Ovary (tissue), 10 donors: ENCODE measurements at regions of chrX and their contacts with region 1.

Region 1: GRCh38 chrX:53211391-53211978 is 13.5 kb downstream of the KDM5C start:
- DNase-seq: no peak
- H3K4me3 ChIP-seq: no peak overlapping the region
- H3K27ac ChIP-seq: no peak overlapping the region
- H3K4me1 ChIP-seq: no peaks in the 10 kb centered on the region
- H3K27me3 ChIP-seq: no peaks in the 10 kb centered on the region
- CTCF ChIP-seq: no peak
- EP300 ChIP-seq: no peak
- POLR2A ChIP-seq: no peak

Region 2: DNA sequence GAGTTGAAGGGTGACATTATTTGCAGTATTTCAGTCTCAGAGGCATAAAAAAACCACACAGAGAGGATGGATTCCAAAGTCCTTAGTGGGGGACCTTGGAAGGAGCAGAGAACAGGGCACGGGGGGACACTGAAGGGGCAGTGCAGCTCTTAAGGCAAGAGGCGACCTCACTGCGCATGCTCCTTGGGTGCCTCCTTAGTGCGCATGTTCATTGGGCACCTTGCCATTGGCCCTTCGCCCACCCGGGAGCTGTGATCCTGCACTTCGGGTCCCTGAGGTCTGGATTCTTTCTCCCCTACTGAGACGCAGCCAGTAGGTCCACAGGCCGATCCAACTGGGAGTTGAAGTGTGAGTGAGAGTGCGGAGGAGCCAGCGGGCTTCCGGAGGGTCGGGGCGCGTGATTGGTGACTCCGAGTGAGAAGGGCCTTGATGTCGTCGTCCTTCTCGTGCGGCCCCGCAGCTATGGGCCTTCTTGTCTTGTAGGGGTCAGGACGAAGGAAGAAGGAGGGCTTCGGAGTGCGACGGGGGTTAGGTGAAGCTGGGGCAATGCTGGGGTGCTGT is 400.3 kb before region 1 on chrX and contains the start of gene XAGE5:
- intact Hi-C with region 1: no loop called
- DNase-seq: no peak
- H3K4me3 ChIP-seq: no peak within 1 kb of the TSS
- H3K27ac ChIP-seq: no peak within 1 kb of the TSS
- H3K4me1 ChIP-seq: no peaks in the 10 kb centered on the region
- H3K27me3 ChIP-seq: no peaks in the 10 kb centered on the region
- CTCF ChIP-seq: no peak
- EP300 ChIP-seq: no peak
- POLR2A ChIP-seq: no peak
- total RNA-seq, gene XAGE5: not detected

Region 3: DNA sequence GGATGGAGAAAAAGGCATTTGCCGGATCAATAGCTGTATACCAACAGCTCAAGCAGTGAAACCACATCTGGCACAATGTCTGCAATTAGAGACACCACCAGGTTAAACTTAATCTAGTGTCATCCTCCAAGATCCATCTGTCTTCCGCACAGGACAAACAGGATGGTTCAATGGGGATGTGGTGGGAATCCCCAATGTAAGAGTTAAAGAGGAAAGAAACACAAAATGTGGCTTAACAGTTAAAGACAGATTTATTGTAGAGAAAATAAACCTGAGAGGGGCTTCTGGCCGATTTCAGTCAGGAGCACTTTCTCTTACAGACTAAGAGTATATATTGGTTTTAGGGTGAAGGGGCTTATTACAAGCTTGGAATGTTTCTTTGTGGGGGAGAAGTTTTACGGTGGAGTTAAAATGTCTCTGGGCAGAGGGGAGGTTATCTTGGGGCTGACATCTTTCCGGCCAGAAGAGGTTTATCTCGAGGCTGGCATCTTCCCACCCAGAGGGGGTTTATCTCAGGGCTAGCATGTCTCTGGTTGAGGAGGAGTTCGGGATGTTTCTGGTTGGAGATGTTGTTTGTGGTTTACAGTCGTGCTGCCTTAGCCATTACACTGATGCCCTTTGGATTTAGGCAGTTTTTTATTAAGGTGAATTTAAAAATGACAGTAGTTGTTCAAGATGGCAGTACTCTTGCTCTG is 55.8 kb before region 1 on chrX:
- intact Hi-C with region 1: loop called in 1 of 4 experiments (anchors 10 kb)
- DNase-seq: no peak
- H3K4me3 ChIP-seq: no peak overlapping the region
- H3K27ac ChIP-seq: no peak overlapping the region
- H3K4me1 ChIP-seq: no peaks in the 10 kb centered on the region
- H3K27me3 ChIP-seq: no peaks in the 10 kb centered on the region
- CTCF ChIP-seq: no peak
- EP300 ChIP-seq: no peak
- POLR2A ChIP-seq: no peak

Region 4: GRCh38 chrX:53171356-53171755 is 40.1 kb before region 1 on chrX:
- intact Hi-C with region 1: no loop called
- DNase-seq: no peak
- H3K4me3 ChIP-seq: no peak overlapping the region
- H3K27ac ChIP-seq: no peak overlapping the region
- H3K4me1 ChIP-seq: no peaks in the 10 kb centered on the region
- H3K27me3 ChIP-seq: no peaks in the 10 kb centered on the region
- CTCF ChIP-seq: no peak
- EP300 ChIP-seq: no peak
- POLR2A ChIP-seq: no peak